Vagina (tissue), 2 donors: ENCODE measurements at regions of chr17 and their contacts with region 1.

Region 1: GRCh38 chr17:8294814-8295316 is 335 bp downstream of the SLC25A35 start:
- DNase-seq: no peak
- H3K4me3 ChIP-seq: peak overlapping the region; percentile 64 to 67
- H3K27ac ChIP-seq: peak overlapping the region; percentile 86
- H3K4me1 ChIP-seq: peaks cover 8% of the 10 kb centered on the region
- H3K27me3 ChIP-seq: no peaks in the 10 kb centered on the region
- CTCF ChIP-seq: no peak
- POLR2A ChIP-seq: no peak

Region 2: DNA sequence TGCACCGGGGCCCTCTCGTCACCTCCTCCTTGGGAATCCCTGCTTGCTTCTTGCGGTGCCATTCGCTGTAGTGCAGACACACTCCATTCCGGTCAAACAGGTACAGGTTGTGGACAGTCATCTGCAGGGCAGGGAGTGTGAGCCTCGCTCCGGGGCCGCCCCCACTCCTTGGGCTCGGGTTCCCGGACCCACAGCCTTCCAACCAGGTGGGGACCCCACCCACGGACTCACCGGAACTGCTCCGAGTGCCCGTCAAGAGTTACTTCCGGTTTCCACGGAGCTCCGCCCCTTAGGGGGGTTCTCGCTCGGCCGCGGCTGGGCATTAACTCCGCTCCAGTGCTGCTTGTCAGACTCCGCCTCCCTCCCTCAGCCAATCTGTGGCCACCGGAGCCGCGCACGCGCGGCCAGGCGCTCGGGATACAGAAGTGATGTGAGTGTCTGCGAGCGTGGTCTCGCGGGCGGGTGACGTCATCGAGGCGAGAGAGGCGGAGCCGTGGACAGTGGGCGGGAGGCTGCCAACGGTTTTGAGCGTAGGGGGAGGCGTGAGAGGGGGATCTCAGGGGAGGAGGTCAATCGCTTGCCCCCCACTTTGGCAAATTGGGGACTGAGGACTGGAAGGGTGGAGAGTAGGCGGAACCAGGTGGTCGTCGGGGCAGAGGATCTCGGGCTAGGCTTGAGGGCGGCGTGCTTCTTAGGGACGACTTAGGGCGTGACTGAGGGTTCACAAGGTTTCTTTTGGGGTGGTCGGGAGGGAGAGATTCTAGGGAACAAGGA is 363.0 kb before region 1 on chr17 and contains the starts of genes CNTROB and TRAPPC1:
- intact Hi-C with region 1: no loop called
- DNase-seq: peak; percentile 100
- H3K4me3 ChIP-seq: peak within 1 kb of the TSS; percentile 71 to 88
- H3K27ac ChIP-seq: peak within 1 kb of the TSS; percentile 89
- H3K4me1 ChIP-seq: peaks cover 46% of the 10 kb centered on the region
- H3K27me3 ChIP-seq: no peaks in the 10 kb centered on the region
- CTCF ChIP-seq: no peak
- POLR2A ChIP-seq: peak; percentile 78 to 83
- total RNA-seq, gene CNTROB: 20.9 TPM
- total RNA-seq, gene TRAPPC1: 74.4 TPM

Region 3: GRCh38 chr17:8091033-8091687 is 203.7 kb before region 1 on chr17:
- intact Hi-C with region 1: loop called (anchors 10 kb)
- DNase-seq: no peak
- H3K4me3 ChIP-seq: no peak overlapping the region
- H3K27ac ChIP-seq: no peak overlapping the region
- H3K4me1 ChIP-seq: no peaks in the 10 kb centered on the region
- H3K27me3 ChIP-seq: no peaks in the 10 kb centered on the region
- CTCF ChIP-seq: no peak
- POLR2A ChIP-seq: no peak

Region 4: DNA sequence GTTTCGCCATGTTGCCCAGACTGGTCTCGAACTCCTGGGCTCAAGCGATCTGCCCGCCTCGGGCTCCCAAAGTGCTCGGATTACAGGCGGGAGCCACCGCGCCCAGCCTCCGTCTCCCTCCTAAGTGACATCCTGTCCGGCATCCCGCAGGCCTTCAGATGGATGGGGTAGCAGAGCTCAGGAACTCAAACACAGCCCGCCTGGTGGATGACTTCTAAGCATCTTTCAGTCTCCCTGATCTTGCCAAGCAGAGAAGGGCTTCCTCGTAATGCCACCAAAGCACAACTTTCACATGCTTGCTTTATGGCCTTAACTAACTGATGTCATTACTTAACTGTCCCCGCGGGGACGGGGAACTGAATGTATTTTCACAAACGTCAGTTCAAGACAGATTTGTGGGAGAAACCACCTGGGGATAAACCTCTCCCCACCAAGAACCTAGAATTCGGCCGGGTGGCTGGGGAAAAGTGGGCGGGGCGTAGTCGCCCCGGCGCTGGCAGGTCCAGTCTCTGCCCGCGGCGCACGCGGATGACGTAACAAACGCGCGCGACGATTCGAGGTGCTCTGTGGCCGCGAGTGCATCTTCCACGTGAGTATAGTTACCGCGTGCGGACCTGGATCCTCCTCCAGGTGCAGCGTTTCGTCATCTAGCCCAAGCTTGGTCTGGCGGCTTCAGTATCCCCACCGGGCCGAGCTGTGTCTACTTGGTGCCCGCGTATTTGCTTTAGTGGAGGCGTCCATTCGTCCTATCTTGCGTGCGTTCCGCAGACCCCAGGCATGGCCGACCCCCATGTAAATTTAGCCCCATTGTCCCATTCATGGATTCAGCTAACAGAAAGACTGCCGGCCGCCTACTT is 45.9 kb before region 1 on chr17 and contains the start of gene PFAS:
- intact Hi-C with region 1: loop called (anchors 5 kb)
- DNase-seq: peak in 1 of 2 donors; percentile 95
- H3K4me3 ChIP-seq: peak within 1 kb of the TSS; percentile 85 to 89
- H3K27ac ChIP-seq: peak within 1 kb of the TSS; percentile 98
- H3K4me1 ChIP-seq: peaks cover 10% of the 10 kb centered on the region
- H3K27me3 ChIP-seq: no peaks in the 10 kb centered on the region
- CTCF ChIP-seq: no peak
- POLR2A ChIP-seq: peak in 1 of 2 donors; percentile 33
- total RNA-seq, gene PFAS: 36.3 TPM